RWPE1 (cell line): ENCODE measurements at regions of chr5 and their contacts with region 1.

Region 1: GRCh38 chr5:174327317-174328236 is 282.1 kb downstream of the NSG2 start:
- DNase-seq: peak; percentile 93
- H3K27ac ChIP-seq: no peak overlapping the region
- CTCF ChIP-seq: peak; percentile 84

Region 2: DNA sequence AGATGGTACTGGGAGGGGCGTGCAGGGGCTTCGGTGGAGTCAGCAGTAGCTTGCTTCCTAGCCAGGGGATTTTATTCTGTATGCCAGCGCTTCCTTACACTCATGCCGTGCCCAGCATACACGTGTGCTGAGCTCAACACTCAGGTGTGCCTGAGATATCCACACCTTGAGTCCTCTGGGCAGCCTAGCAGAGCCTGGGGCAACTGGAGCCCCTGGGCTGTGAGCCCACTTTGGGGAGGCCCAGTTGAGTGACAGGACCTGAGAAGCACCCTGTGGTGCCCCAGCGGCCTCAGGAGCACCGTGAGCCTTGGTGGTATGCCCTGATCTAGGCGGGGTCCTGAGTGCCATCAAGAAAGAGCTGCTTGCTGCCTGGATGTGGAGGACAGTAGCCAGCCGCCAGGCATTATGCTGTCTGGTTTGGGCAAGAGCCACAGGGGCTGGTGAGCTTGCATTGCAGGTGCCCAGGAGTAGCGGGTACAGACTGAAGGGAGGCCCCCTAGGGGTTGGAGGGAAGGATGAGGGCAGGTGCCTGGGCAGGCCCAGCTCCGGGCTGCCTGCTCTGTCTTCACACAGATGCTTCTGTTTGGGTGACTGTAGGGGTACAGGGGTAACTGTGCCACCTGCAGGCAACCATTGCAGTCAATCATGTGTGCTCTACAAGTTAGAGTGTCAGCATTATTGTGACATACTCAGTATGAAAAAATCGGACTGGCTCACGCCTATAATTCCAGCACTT is 1140.4 kb before region 1 on chr5:
- CTCF ChIA-PET with region 1: no interaction called
- POLR2A ChIA-PET with region 1: no interaction called
- DNase-seq: no peak
- H3K27ac ChIP-seq: no peak overlapping the region
- CTCF ChIP-seq: no peak

Region 3: GRCh38 chr5:174251305-174252000 is 76.1 kb before region 1 on chr5:
- CTCF ChIA-PET with region 1: no interaction called
- POLR2A ChIA-PET with region 1: no interaction called
- DNase-seq: no peak
- H3K27ac ChIP-seq: no peak overlapping the region
- CTCF ChIP-seq: no peak

Region 4: GRCh38 chr5:174295702-174296436 is 31.7 kb before region 1 on chr5:
- CTCF ChIA-PET with region 1: no interaction called
- POLR2A ChIA-PET with region 1: no interaction called
- DNase-seq: no peak
- H3K27ac ChIP-seq: no peak overlapping the region
- CTCF ChIP-seq: no peak

Region 5: GRCh38 chr5:174317259-174317894 is 10.2 kb before region 1 on chr5:
- CTCF ChIA-PET with region 1: interaction called, 15 read pairs
- POLR2A ChIA-PET with region 1: no interaction called
- DNase-seq: peak; percentile 77
- H3K27ac ChIP-seq: no peak overlapping the region
- CTCF ChIP-seq: peak; percentile 84

Region 6: GRCh38 chr5:174338185-174339010 is 10.8 kb after region 1 on chr5:
- CTCF ChIA-PET with region 1: interaction called, 13 read pairs
- POLR2A ChIA-PET with region 1: no interaction called
- DNase-seq: peak; percentile 52
- H3K27ac ChIP-seq: no peak overlapping the region
- CTCF ChIP-seq: no peak

Region 7: GRCh38 chr5:174418928-174419796 is 91.6 kb after region 1 on chr5:
- CTCF ChIA-PET with region 1: interaction called, 19 read pairs
- POLR2A ChIA-PET with region 1: no interaction called
- DNase-seq: peak; percentile 86
- H3K27ac ChIP-seq: no peak overlapping the region
- CTCF ChIP-seq: peak; percentile 97

Region 8: DNA sequence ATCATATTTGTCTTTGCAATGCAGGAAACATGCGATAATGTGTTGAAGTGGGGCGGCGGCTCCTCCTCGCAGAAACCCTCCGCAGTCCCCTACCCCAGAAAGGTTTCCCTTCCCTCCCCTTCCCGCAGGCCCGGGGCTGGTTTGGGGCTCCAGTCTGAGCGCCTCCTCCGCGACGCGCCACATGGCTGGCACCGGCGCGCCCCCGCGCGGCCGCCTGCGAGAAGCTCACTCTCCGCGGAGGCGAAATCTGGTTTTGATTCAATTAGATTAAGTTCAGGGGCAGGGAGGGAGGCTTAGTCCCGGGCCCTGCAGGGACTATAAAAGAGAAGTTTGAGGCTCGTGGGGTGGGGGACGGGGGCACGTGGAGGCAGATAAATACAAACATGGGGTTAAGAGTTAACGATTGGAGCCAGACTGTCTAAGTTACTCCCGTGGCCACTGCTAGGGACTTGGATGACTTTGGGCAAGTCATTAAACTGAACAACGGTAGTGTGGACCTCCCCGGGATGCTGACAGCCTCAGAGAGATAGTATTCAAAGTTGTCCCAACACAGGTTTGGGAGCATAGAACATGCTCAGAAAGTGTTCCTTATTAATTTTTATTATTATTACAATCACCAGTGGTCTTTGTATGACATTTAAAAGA is 466.2 kb after region 1 on chr5:
- CTCF ChIA-PET with region 1: interaction called, 12 read pairs
- POLR2A ChIA-PET with region 1: no interaction called
- DNase-seq: peak; percentile 68
- H3K27ac ChIP-seq: no peak overlapping the region
- CTCF ChIP-seq: peak; percentile 95

Region 9: GRCh38 chr5:175378444-175379028 is 1051.0 kb after region 1 on chr5:
- CTCF ChIA-PET with region 1: no interaction called
- POLR2A ChIA-PET with region 1: interaction called, 12 read pairs
- DNase-seq: peak; percentile 89
- H3K27ac ChIP-seq: no peak overlapping the region
- CTCF ChIP-seq: no peak